CD4-positive, alpha-beta T cell (primary cell): ENCODE measurements at regions of chr11 and their contacts with region 1.

Region 1: GRCh38 chr11:74929431-74930363 is 19.2 kb downstream of the XRRA1 start:
- DNase-seq: peak; percentile 25 to 88 (median 56)
- ATAC-seq: peak; percentile 82
- H3K4me3 ChIP-seq: no peak overlapping the region
- H3K4me3 Mint-ChIP-seq: no peak overlapping the region
- H3K27ac ChIP-seq: no peak overlapping the region
- H3K27ac Mint-ChIP-seq: no peak overlapping the region
- H3K4me1 ChIP-seq: no peaks in the 10 kb centered on the region
- H3K4me1 Mint-ChIP-seq: no peaks in the 10 kb centered on the region
- H3K27me3 ChIP-seq: no peaks in the 10 kb centered on the region
- H3K27me3 Mint-ChIP-seq: no peaks in the 10 kb centered on the region
- CTCF ChIP-seq: peak; percentile 97

Region 2: GRCh38 chr11:74696932-74697687 is 232.6 kb before region 1 on chr11:
- CTCF ChIA-PET with region 1: no interaction called
- POLR2A ChIA-PET with region 1: no interaction called
- intact Hi-C with region 1: no loop called
- DNase-seq: no peak
- ATAC-seq: no peak
- H3K4me3 ChIP-seq: no peak overlapping the region
- H3K4me3 Mint-ChIP-seq: no peak overlapping the region
- H3K27ac ChIP-seq: no peak overlapping the region
- H3K27ac Mint-ChIP-seq: no peak overlapping the region
- H3K4me1 ChIP-seq: no peaks in the 10 kb centered on the region
- H3K4me1 Mint-ChIP-seq: no peaks in the 10 kb centered on the region
- H3K27me3 ChIP-seq: peaks cover 0 to 4% of the 10 kb centered on the region in 2 experiments
- H3K27me3 Mint-ChIP-seq: peaks cover 18% of the 10 kb centered on the region
- CTCF ChIP-seq: no peak

Region 3: GRCh38 chr11:74791333-74792100 is 138.2 kb before region 1 on chr11:
- CTCF ChIA-PET with region 1: no interaction called
- POLR2A ChIA-PET with region 1: no interaction called
- intact Hi-C with region 1: no loop called
- DNase-seq: no peak
- ATAC-seq: no peak
- H3K4me3 ChIP-seq: no peak overlapping the region
- H3K4me3 Mint-ChIP-seq: no peak overlapping the region
- H3K27ac ChIP-seq: no peak overlapping the region
- H3K27ac Mint-ChIP-seq: no peak overlapping the region
- H3K4me1 ChIP-seq: no peaks in the 10 kb centered on the region
- H3K4me1 Mint-ChIP-seq: peaks cover 8% of the 10 kb centered on the region
- H3K27me3 ChIP-seq: no peaks in the 10 kb centered on the region
- H3K27me3 Mint-ChIP-seq: no peaks in the 10 kb centered on the region
- CTCF ChIP-seq: no peak

Region 4: DNA sequence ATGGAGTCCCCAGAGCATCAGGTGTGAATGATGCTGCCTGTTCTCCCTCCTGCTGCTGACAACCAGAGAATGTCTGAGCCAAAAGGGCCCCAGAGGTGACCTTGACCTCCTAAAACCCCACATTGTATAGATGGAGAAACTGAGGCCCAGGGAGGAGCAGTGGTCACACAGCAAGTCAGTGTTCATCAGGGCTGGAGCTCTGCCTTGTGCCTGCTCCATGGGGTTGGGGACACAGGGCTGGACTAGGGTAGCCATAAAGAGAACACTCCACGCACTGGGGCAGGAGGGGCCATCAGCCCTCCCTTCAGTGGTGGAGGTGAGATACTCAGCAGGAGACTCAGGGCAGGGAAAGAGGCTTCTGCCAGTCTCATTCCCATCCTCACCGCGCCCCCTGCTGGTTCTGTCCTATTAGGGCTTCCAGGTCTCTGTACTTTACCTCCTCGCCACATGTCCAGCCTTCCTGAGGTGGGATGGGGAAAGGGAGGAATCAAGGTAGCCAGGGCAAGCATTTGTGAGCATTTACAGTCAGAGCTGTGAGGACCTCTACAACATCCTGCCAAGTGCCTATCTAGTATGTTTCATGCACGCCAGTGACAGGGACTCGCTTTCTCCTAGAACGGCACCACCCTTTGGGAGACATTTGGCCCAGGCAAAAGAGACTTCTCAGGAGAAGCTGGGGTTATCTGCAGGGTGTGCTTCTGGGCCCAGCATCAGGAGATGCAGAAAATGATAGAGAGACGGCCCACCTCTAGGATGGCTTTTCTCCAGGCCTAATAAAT is 102.3 kb after region 1 on chr11:
- CTCF ChIA-PET with region 1: interaction called, 4 read pairs
- POLR2A ChIA-PET with region 1: no interaction called
- intact Hi-C with region 1: loop called (anchors 1 kb)
- DNase-seq: peak; percentile 17 to 69 (median 53)
- ATAC-seq: no peak
- H3K4me3 ChIP-seq: no peak overlapping the region
- H3K4me3 Mint-ChIP-seq: no peak overlapping the region
- H3K27ac ChIP-seq: no peak overlapping the region
- H3K27ac Mint-ChIP-seq: no peak overlapping the region
- H3K4me1 ChIP-seq: no peaks in the 10 kb centered on the region
- H3K4me1 Mint-ChIP-seq: no peaks in the 10 kb centered on the region
- H3K27me3 ChIP-seq: no peaks in the 10 kb centered on the region
- H3K27me3 Mint-ChIP-seq: no peaks in the 10 kb centered on the region
- CTCF ChIP-seq: peak; percentile 62

Region 5: DNA sequence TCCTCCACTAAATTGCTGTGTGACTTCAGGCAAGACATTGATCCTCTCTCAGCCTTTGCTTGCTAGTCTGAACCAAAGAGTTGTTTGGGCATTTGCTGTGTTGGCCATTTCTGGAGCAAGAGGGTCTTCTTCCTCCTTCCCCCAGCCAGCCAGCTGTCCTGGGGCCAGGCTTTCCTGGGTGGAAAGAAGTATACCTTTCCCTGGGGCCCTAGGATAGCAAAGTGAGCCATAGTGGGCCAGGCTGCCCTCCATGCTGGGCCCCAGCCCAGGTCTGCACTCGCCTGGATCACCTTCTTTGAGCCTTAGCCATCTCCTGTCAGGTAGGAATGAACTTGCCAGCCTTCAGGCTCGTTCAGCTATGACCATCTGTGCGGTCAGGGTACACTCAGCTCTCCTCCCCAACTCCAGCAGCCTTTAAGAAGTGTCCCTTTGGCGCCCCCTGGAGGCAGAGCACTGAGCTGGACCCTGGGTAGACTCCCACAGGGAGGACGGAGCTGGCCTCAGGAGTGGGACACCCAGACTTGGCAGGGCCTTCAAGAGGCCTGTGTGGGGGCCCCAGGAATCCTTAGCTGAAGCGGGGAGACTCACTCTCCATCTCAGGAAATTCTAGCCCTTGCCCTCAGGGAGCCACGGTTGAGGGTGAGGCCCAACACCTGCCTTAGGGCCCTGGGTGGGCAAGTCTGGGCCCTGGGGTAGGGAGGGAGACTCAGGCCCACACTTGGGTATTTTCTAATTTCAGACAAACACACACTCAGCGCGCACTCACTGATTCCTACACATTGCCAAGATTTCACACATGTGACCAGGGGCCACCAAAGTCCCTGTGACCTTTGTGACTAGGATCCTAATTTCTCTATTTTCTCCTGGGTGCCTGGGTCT is 275.2 kb after region 1 on chr11:
- CTCF ChIA-PET with region 1: interaction called, 5 read pairs
- POLR2A ChIA-PET with region 1: no interaction called
- intact Hi-C with region 1: loop called (anchors 1 kb)
- DNase-seq: peak; percentile 66 to 90 (median 78)
- ATAC-seq: peak; percentile 74
- H3K4me3 ChIP-seq: no peak overlapping the region
- H3K4me3 Mint-ChIP-seq: no peak overlapping the region
- H3K27ac ChIP-seq: no peak overlapping the region
- H3K27ac Mint-ChIP-seq: no peak overlapping the region
- H3K4me1 ChIP-seq: no peaks in the 10 kb centered on the region
- H3K4me1 Mint-ChIP-seq: no peaks in the 10 kb centered on the region
- H3K27me3 ChIP-seq: peaks cover 2 to 9% of the 10 kb centered on the region in 2 experiments
- H3K27me3 Mint-ChIP-seq: peaks cover 3% of the 10 kb centered on the region
- CTCF ChIP-seq: peak; percentile 87